Heart right ventricle (tissue), 16 donors: ENCODE measurements at regions of chr6 and their contacts with region 1.

Region 1: GRCh38 chr6:33579828-33580714 is at the start of gene BAK1:
- DNase-seq: peak; percentile 90 to 92
- ATAC-seq: peak; percentile 92 to 97 (median 95)
- H3K4me3 ChIP-seq: peak within 1 kb of the TSS; percentile 50 to 95 (median 90)
- H3K27ac ChIP-seq: peak within 1 kb of the TSS; percentile 54 to 94 (median 90)
- H3K4me1 ChIP-seq: peaks cover 18 to 39% (median 33%) of the 10 kb centered on the region in 9 donors
- H3K27me3 ChIP-seq: no peaks in the 10 kb centered on the region
- CTCF ChIP-seq: peak; percentile 30 to 75 (median 61)
- total RNA-seq, gene BAK1: 16.0 to 26.4 (median 18.7) TPM

Region 2: GRCh38 chr6:33425668-33426577 is 154.1 kb before region 1 on chr6:
- intact Hi-C with region 1: loop called in 2 of 10 experiments (anchors 5 to 10 kb)
- DNase-seq: peak; percentile 86 to 91
- ATAC-seq: peak; percentile 80 to 87 (median 84)
- H3K4me3 ChIP-seq: peak overlapping the region; percentile 47 to 74 (median 64)
- H3K27ac ChIP-seq: peak overlapping the region; percentile 85 to 97 (median 92)
- H3K4me1 ChIP-seq: peaks cover 15 to 57% (median 46%) of the 10 kb centered on the region in 9 donors
- H3K27me3 ChIP-seq: no peaks in the 10 kb centered on the region
- CTCF ChIP-seq: peak; percentile 20 to 81 (median 70)

Region 3: DNA sequence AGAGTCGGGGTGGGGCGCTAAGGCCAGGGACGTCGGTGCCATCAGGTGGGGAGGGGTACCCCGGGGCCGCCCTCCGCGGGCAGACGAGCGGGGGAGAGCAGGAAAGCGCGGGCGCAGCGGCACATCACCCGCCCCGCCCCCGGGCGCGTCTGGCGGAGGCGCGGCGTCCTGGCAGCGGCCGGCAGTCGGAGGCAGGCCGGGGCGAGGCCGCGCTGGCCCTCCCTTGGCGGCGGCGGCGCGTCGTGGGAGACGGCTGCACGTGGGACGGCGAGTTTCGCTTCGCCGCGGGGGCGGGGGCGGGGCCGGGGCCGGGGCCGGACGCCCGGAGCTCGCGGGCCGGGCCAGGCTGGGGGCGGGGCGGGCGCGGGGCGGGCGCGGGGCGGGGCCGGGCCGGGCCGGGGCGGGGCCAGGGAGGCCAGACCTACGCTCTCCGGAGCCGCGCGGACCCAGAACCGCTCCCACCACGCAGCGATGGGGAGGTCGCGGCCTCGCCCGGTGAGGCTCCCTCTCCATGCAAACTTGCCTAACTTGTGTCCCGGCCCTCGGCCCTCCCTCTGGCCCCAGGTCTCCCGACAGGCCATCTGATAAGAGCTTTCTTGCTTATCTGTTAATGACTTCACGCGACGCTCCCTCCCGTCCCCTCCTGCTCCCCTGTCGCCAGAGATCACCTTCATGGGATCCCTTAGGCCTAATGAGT is 53.5 kb after region 1 on chr6:
- intact Hi-C with region 1: loop called in 5 of 10 experiments (anchors 5 to 10 kb)
- DNase-seq: peak; percentile 65 to 79
- ATAC-seq: peak; percentile 78 to 89 (median 86)
- H3K4me3 ChIP-seq: peak overlapping the region in 9 of 10 donors; percentile 30 to 55 (median 48)
- H3K27ac ChIP-seq: peak overlapping the region in 8 of 10 donors; percentile 35 to 69 (median 54)
- H3K4me1 ChIP-seq: peaks cover 9 to 30% (median 24%) of the 10 kb centered on the region in 9 donors
- H3K27me3 ChIP-seq: peaks cover 0 to 13% (median 0%) of the 10 kb centered on the region in 7 donors
- CTCF ChIP-seq: no peak

Region 4: GRCh38 chr6:33700391-33701050 is 120.5 kb after region 1 on chr6:
- intact Hi-C with region 1: loop called in 3 of 10 experiments (anchors 1 to 10 kb)
- DNase-seq: peak; percentile 61 to 62
- ATAC-seq: peak in 7 of 8 donors; percentile 22 to 66 (median 50)
- H3K4me3 ChIP-seq: no peak overlapping the region
- H3K27ac ChIP-seq: peak overlapping the region in 4 of 10 donors; percentile 19 to 60 (median 24)
- H3K4me1 ChIP-seq: peaks cover 18 to 69% (median 46%) of the 10 kb centered on the region in 9 donors
- H3K27me3 ChIP-seq: no peaks in the 10 kb centered on the region
- CTCF ChIP-seq: peak; percentile 38 to 77 (median 68)

Region 5: DNA sequence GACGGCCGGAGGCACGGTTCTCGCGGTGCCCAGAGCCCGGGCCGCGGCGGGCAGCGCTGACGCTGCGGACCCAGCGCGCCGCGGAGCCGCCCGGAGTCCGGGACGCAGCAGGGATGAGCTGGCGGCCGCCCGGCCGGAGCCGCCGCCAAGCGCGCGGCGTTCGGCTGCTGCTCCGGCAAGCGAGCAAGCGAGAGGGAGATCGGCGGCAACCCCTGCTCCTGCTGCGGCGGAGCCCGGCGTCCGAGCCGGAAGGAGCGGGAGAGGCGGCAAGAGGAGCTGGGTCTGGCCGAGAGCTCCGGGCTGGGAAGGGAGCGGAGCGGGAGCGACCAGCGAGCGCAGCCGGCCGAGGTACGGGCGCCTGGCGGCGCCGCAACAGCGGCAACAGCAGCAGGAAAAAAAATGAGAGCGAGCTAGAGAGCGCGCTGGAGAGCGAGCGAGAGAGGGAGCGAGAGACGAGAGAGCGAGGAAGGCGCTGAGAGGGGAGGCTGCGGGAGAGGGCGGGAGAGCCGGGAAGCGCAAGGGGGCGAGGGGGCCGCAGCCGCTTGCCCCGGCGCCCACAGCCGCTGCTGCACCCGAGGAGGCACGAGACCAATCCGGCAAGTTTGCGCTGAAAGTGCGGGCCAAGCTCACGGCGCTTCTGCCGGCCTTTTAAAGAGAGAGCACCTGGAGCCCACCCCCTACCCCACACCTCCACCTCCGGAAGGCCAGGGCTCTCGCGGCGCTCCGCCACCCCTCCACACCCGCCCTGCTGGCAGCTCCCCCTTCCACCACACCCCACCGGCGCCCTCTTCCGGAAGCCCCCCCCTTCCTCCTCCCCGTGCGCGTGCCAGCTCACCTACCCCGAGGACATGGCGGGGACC is 565.3 kb after region 1 on chr6:
- intact Hi-C with region 1: loop called in 6 of 10 experiments (anchors 10 kb)
- DNase-seq: no peak
- ATAC-seq: peak in 7 of 8 donors; percentile 14 to 54 (median 38)
- H3K4me3 ChIP-seq: peak overlapping the region in 9 of 10 donors; percentile 23 to 52 (median 42)
- H3K27ac ChIP-seq: no peak overlapping the region
- H3K4me1 ChIP-seq: peaks cover 9 to 36% (median 24%) of the 10 kb centered on the region in 9 donors
- H3K27me3 ChIP-seq: peaks cover 28 to 94% (median 79%) of the 10 kb centered on the region in 7 donors
- CTCF ChIP-seq: no peak